ENCODE measurements at regions of chr16 and their contacts with region 1.

Region 1: DNA sequence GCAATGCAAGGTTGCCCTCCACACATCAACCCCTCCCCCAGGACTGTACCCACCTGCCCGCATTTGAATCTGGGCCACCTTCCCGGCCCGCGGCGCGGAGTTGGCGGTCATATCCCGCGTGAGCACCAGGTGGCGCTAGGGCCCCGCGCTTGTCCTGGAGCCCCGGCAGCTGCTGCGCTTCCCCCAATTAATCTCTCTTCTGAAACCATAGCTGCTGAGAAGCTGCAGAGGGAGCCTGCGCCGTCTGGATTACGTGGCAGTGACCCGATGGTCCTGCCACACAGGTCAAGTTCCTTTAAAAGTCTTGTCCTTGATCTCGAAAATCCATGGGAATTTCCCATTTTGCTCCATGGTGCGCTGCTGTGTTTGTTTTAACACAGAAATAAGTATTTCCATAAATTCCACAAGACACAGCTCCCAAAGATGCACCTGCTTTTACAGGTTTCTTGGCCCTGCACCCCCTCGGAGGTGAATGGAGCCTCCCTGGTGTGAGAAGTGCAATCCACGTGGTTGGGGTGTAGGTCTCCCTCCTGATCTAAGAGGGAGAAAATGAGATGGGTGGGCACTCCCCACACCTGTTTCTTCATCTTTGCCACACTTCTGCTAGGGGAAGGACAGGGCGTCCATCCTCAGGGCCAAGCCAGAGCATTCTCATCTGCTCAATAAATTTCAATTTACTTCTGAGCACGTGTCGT is 22.1 kb downstream of the COX4I1 start:
- DNase-seq: peak; percentile 62 to 77
- ATAC-seq: peak; percentile 78 to 89 (median 87)
- H3K4me3 ChIP-seq: no peak overlapping the region
- H3K27ac ChIP-seq: no peak overlapping the region
- H3K4me1 ChIP-seq: peaks cover 0 to 11% (median 0%) of the 10 kb centered on the region in 9 donors
- H3K27me3 ChIP-seq: peaks cover 0 to 40% (median 31%) of the 10 kb centered on the region in 7 donors
- CTCF ChIP-seq: peak; percentile 93 to 99 (median 97)

Region 2: GRCh38 chr16:85902366-85903155 is 81.0 kb after region 1 on chr16:
- intact Hi-C with region 1: loop called in 1 of 10 experiments (anchors 10 kb)
- DNase-seq: no peak
- ATAC-seq: no peak
- H3K4me3 ChIP-seq: peak overlapping the region in 2 of 10 donors; percentile 5 to 80
- H3K27ac ChIP-seq: peak overlapping the region in 1 of 10 donors; percentile 90
- H3K4me1 ChIP-seq: peaks cover 0 to 79% (median 15%) of the 10 kb centered on the region in 9 donors
- H3K27me3 ChIP-seq: peaks cover 0 to 68% (median 61%) of the 10 kb centered on the region in 7 donors
- CTCF ChIP-seq: no peak

Region 3: GRCh38 chr16:85986931-85987749 is 165.6 kb after region 1 on chr16:
- intact Hi-C with region 1: loop called (anchors 1 to 10 kb)
- DNase-seq: no peak
- ATAC-seq: peak in 2 of 8 donors; percentile 26 to 57
- H3K4me3 ChIP-seq: peak overlapping the region in 2 of 10 donors; percentile 2 to 24
- H3K27ac ChIP-seq: no peak overlapping the region
- H3K4me1 ChIP-seq: peaks cover 0 to 39% (median 0%) of the 10 kb centered on the region in 9 donors
- H3K27me3 ChIP-seq: peaks cover 0 to 88% (median 71%) of the 10 kb centered on the region in 7 donors
- CTCF ChIP-seq: peak in 8 of 9 donors; percentile 39 to 58 (median 50)

Region 4: GRCh38 chr16:86016201-86016871 is 194.7 kb after region 1 on chr16:
- intact Hi-C with region 1: loop called (anchors 1 to 2 kb)
- DNase-seq: peak in 1 of 2 donors; percentile 46
- ATAC-seq: peak in 6 of 8 donors; percentile 31 to 66 (median 52)
- H3K4me3 ChIP-seq: no peak overlapping the region
- H3K27ac ChIP-seq: no peak overlapping the region
- H3K4me1 ChIP-seq: peaks cover 0 to 8% (median 0%) of the 10 kb centered on the region in 9 donors
- H3K27me3 ChIP-seq: peaks cover 0 to 55% (median 34%) of the 10 kb centered on the region in 7 donors
- CTCF ChIP-seq: peak; percentile 69 to 86 (median 80)

Region 5: DNA sequence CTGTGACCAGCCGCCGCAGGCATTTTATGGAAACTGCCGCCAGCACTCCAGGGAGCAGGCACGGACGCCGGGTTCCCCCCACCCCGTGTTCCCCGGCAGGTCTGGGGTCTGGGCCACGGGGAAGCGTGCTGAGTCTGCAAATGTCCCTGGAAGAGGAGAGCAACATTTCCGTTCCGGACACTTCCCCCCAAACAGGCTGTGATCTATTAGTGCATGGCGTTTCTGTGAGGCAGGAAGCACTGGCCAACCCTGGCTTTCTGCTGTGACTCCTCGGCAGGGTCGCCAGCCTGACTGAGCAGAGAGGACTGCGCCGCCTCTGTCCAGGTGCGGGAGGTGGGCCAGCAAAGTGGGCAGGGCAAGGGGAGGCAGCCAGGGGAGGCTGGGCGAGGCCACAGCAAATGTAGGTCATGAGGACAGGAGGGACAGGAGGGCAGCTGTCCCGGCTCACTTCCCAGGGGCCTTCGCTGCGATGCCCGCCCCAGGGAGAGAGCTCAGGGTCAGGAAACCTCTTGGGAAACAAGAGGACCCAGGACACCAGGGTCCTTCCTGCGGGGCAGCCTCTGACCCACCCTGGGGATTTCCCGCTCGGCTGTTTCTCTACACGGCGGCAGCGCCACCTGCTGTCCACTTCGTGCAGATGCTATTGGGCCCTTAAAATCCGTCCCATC is 698.2 kb after region 1 on chr16:
- intact Hi-C with region 1: loop called in 9 of 10 experiments (anchors 2 to 10 kb)
- DNase-seq: peak; percentile 40 to 66
- ATAC-seq: peak; percentile 32 to 73 (median 46)
- H3K4me3 ChIP-seq: no peak overlapping the region
- H3K27ac ChIP-seq: no peak overlapping the region
- H3K4me1 ChIP-seq: peaks cover 0 to 29% (median 15%) of the 10 kb centered on the region in 9 donors
- H3K27me3 ChIP-seq: peaks cover 13 to 96% (median 85%) of the 10 kb centered on the region in 7 donors
- CTCF ChIP-seq: peak; percentile 76 to 95 (median 92)

Measured in heart right ventricle (tissue), 16 donors.